GM13976 (cell line): ENCODE measurements at regions of chr15 and their contacts with region 1.

Region 1: DNA sequence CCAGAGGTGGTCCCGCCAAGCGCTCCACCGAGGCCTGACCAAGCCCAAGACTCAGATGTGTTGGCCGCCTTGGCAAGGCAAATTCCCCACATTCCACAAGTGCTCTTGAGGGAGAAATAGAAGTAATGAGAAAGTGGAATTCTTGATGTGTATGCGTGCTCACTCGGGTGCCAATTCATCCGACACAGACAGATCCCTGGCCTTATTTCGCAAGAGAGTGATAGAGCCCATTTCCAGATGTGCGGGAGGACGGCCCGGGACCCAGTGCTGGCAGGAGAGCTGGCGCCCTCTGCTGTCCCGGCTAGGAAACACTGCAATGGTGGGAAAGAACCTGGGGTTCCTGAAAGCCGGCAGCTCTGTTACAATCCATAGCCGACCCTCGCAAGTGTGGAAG is 76.0 kb downstream of the HMG20A start:
- DNase-seq: peak; percentile 81
- CTCF ChIP-seq: peak; percentile 91

Region 2: GRCh38 chr15:77118882-77119321 is 377.8 kb before region 1 on chr15:
- in situ Hi-C with region 1: loop called (anchors 5 kb)
- DNase-seq: peak; percentile 53
- CTCF ChIP-seq: peak; percentile 78

Region 3: GRCh38 chr15:77192451-77192850 is 304.3 kb before region 1 on chr15:
- in situ Hi-C with region 1: loop called (anchors 5 kb)
- DNase-seq: no peak
- CTCF ChIP-seq: no peak

Region 4: DNA sequence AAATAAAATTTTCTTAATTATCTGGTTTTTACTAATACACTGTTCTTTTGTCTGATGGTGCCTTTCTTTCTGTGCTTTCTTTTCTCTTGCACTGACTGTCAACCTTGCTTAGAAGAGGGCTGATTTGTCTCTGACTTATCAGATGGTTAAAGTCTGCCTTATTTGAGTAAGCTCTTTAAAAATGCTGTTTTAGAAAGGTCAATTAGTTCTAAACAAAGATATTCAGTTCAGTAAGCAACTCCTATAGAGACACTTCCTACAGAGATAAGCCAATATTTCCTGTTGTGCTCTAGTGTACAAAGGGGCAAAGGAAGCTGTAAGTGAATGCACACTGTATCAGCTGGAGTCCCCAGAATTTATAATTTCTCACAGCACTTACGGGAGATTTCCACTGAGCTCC is 272.4 kb before region 1 on chr15:
- in situ Hi-C with region 1: no loop called
- DNase-seq: no peak
- CTCF ChIP-seq: no peak

Region 5: DNA sequence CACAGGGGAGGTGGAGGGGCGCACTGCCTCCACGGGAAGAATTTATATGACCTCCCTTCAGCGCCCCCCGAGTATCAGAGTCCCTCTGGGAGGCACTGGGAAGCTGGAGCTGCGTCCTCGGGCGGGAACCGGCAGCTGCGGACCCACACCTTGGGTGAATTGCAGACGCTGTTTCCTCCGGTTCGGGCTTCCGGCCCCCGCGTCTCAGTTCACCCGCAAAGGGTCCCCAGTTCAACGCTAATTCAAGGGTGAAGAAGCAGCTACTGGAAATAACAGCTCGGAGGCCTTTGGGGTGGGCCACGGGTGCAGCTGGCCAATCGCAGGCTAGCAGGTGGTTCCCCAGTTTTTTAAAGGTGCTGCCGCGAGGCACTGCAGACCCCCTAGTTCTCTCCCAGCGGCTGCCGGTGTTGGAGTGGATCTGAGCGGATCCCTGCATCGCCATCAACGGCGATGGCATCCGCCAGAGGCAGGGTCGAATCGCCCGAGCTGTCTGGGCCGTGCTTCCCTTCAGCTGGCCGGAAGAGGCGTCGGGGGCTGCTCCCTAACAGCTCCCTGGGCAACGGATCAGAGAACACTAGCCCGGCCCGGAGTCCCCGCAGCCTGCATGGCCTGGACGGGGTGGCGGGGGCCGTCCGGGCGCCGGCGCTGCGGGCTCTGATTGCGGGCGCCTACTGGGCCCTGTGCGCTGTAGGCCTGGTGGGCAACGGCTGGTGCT is 1334.0 kb after region 1 on chr15:
- in situ Hi-C with region 1: no loop called
- DNase-seq: peak; percentile 58
- CTCF ChIP-seq: no peak